ENCODE measurements at regions of chr2 and their contacts with region 1.

Region 1: GRCh38 chr2:37890893-37891495 is 34.1 kb upstream of the RMDN2 start:
- DNase-seq: peak; percentile 88

Region 2: DNA sequence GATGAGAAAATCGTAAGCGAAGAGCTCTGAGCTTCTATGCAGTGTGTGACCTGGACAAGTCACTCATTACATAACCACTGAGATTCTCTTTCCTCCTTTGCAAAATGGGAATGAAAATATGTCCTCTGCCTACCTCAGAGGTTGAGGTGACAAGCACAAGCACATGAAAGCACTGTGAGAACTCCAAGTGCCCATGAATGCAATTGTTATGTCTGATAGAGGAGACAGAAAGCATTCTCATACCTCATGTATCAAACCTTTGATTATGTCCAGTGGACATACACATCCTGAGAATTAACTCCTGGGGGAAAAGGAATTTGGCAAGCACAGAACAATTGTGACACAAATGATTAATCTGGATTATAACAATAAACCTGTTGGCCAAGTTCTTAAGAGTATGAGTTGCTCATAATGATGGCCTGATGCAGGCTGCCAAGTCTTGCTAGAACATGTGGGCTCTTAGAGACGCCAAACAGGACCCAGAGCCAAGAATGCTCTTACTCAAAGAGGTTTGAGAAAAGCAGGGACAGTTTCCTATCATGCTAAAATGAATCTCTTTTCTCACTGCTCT is 25.6 kb after region 1 on chr2:
- intact Hi-C with region 1: loop called (anchors 1 kb)
- DNase-seq: no peak

Region 3: GRCh38 chr2:38037757-38038621 is 147.0 kb after region 1 on chr2:
- intact Hi-C with region 1: no loop called
- DNase-seq: no peak

Region 4: GRCh38 chr2:38274286-38275276 is 383.6 kb after region 1 on chr2:
- intact Hi-C with region 1: loop called (anchors 10 kb)
- DNase-seq: no peak